ENCODE measurements at regions of chr7 and their contacts with region 1.

Region 1: DNA sequence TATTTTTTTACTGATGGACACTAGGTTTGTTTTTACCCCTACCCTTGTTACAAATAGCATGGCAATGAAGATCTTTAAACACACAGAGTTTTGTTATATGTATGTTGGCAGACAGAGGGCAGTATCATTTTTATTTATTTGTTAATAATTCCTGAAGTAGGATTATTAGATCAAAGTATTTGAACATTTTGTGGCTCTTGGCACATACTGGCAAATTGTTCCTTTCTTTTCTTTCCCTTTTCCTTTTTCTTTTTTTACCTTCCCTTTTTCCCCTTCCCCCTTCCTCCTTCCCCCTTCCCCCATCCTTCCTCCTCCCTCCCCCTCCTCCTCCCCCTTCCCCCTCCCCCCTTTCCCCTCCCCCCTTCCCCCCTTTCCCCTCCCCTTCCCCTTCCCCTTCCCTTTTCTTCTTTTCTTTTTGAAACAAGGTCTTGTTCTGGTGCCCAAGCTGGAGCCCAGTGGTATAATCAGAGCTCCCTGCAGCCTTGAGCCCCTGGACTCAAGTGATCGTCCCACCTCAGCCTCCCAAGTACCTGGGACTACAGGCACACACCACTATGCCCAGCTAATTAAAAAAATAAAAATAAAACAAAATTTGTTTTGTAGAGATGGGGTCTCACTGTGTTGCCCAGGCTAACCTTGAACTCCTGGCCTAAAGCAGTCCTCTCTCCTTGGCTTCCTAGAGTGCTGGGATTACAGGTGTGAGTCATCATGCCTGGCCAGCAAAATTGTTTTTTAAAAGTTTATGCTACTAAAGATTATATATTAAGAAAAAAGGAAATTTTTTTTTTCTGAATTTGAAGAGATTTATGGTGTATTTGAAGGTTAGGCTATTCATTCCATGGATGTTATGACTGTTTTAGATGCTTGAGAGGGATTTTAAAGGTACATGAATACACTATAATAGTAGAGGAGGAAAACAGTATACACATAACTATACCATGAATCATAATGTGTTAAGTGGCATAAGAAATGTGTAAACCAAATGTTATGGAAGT is 39.3 kb downstream of the SEPTIN7 start:
- DNase-seq: no peak
- ATAC-seq: no peak
- H3K4me3 ChIP-seq: no peak overlapping the region
- H3K27ac ChIP-seq: no peak overlapping the region
- H3K4me1 ChIP-seq: no peaks in the 10 kb centered on the region
- H3K27me3 ChIP-seq: no peaks in the 10 kb centered on the region
- CTCF ChIP-seq: no peak
- EP300 ChIP-seq: no peak
- POLR2A ChIP-seq: no peak
- RAD21 ChIP-seq: no peak

Region 2: GRCh38 chr7:35658602-35659201 is 181.5 kb before region 1 on chr7:
- CTCF ChIA-PET with region 1: no interaction called
- POLR2A ChIA-PET with region 1: no interaction called
- RAD21 ChIA-PET with region 1: no interaction called
- SMC1A ChIA-PET with region 1: no interaction called
- in situ Hi-C with region 1: no loop called
- intact Hi-C with region 1: no loop called
- DNase-seq: peak; percentile 26
- ATAC-seq: peak; percentile 71
- H3K4me3 ChIP-seq: no peak overlapping the region
- H3K27ac ChIP-seq: peak overlapping the region; percentile 44; the same call in 1 of the 2 replicates
- H3K4me1 ChIP-seq: peaks cover 8% of the 10 kb centered on the region; the same call in 1 of the 2 replicates
- H3K27me3 ChIP-seq: no peaks in the 10 kb centered on the region
- CTCF ChIP-seq: no peak
- EP300 ChIP-seq: no peak
- POLR2A ChIP-seq: no peak
- RAD21 ChIP-seq: no peak

Region 3: GRCh38 chr7:35716038-35716803 is 123.9 kb before region 1 on chr7:
- CTCF ChIA-PET with region 1: no interaction called
- POLR2A ChIA-PET with region 1: no interaction called
- RAD21 ChIA-PET with region 1: no interaction called
- SMC1A ChIA-PET with region 1: no interaction called
- in situ Hi-C with region 1: no loop called
- intact Hi-C with region 1: no loop called
- DNase-seq: no peak
- ATAC-seq: no peak
- H3K4me3 ChIP-seq: no peak overlapping the region
- H3K27ac ChIP-seq: no peak overlapping the region
- H3K4me1 ChIP-seq: peaks cover 7% of the 10 kb centered on the region
- H3K27me3 ChIP-seq: no peaks in the 10 kb centered on the region
- CTCF ChIP-seq: no peak
- EP300 ChIP-seq: no peak
- POLR2A ChIP-seq: no peak
- RAD21 ChIP-seq: no peak

Region 4: GRCh38 chr7:35785250-35785649 is 54.9 kb before region 1 on chr7:
- CTCF ChIA-PET with region 1: no interaction called
- POLR2A ChIA-PET with region 1: no interaction called
- RAD21 ChIA-PET with region 1: no interaction called
- SMC1A ChIA-PET with region 1: no interaction called
- in situ Hi-C with region 1: no loop called
- intact Hi-C with region 1: no loop called
- DNase-seq: no peak
- ATAC-seq: no peak
- H3K4me3 ChIP-seq: no peak overlapping the region
- H3K27ac ChIP-seq: no peak overlapping the region
- H3K4me1 ChIP-seq: no peaks in the 10 kb centered on the region
- H3K27me3 ChIP-seq: no peaks in the 10 kb centered on the region
- CTCF ChIP-seq: no peak
- EP300 ChIP-seq: no peak
- POLR2A ChIP-seq: no peak
- RAD21 ChIP-seq: no peak

Region 5: GRCh38 chr7:35828817-35829216 is 11.3 kb before region 1 on chr7:
- CTCF ChIA-PET with region 1: interaction called, 3 read pairs
- POLR2A ChIA-PET with region 1: no interaction called
- RAD21 ChIA-PET with region 1: interaction called, 3 read pairs
- SMC1A ChIA-PET with region 1: interaction called, 14 read pairs
- in situ Hi-C with region 1: no loop called
- intact Hi-C with region 1: no loop called
- DNase-seq: no peak
- ATAC-seq: no peak
- H3K4me3 ChIP-seq: no peak overlapping the region
- H3K27ac ChIP-seq: no peak overlapping the region
- H3K4me1 ChIP-seq: no peaks in the 10 kb centered on the region
- H3K27me3 ChIP-seq: no peaks in the 10 kb centered on the region
- CTCF ChIP-seq: no peak
- EP300 ChIP-seq: no peak
- POLR2A ChIP-seq: no peak
- RAD21 ChIP-seq: no peak

Measured in GM12878 (cell line).